B cell (primary cell): ENCODE measurements at regions of chr15 and their contacts with region 1.

Region 1: DNA sequence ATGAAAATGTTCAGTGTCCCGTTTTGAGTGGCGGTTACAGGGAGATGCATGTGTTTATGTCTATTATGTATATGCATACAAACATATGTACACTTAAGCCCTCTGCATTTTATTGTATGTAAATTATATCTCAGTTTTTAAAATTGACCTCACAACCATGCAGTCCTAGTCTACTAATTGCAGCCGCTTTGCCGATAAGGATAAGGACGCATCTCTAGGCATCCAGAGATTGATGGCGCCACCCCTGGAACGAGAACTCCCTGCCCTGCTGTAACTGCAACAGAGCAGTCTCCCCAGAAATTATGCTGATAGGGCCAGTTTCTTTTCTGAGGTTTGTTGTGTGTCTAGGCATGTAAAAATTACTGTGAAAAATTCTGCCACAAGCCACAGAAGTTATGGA is 40.4 kb upstream of the TUBGCP5 start:
- DNase-seq: no peak
- ATAC-seq: no peak
- H3K4me3 ChIP-seq: no peak overlapping the region
- H3K4me3 Mint-ChIP-seq: no peak overlapping the region
- H3K27ac ChIP-seq: no peak overlapping the region
- H3K27ac Mint-ChIP-seq: no peak overlapping the region
- H3K4me1 ChIP-seq: no peaks in the 10 kb centered on the region
- H3K4me1 Mint-ChIP-seq: no peaks in the 10 kb centered on the region
- H3K27me3 ChIP-seq: peaks cover 0 to 6% (median 0%) of the 10 kb centered on the region in 4 experiments
- H3K27me3 Mint-ChIP-seq: peaks cover 6% of the 10 kb centered on the region
- CTCF ChIP-seq: no peak

Region 2: DNA sequence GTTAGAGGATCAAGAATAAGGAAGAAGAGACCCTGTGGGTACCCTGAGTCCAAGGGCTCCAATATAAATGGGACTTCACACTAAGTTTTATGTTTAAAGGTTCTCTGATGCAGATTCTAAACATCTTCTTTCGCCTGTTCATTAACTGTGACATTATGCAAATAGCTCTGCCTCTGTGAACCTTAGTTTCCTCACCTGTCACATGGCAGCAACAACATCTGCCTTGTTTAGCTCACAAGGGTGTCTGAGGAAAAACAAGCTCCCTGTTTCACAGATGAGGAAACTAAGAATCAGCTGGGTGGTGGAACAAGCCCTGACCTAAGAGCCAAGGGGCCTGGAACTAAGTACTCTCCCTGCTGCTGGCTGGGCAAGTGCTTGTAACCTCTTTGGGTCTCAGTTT is 16.0 kb after region 1 on chr15:
- CTCF ChIA-PET with region 1: no interaction called
- POLR2A ChIA-PET with region 1: no interaction called
- intact Hi-C with region 1: loop called (anchors 2 kb)
- DNase-seq: no peak
- ATAC-seq: no peak
- H3K4me3 ChIP-seq: no peak overlapping the region
- H3K4me3 Mint-ChIP-seq: no peak overlapping the region
- H3K27ac ChIP-seq: no peak overlapping the region
- H3K27ac Mint-ChIP-seq: no peak overlapping the region
- H3K4me1 ChIP-seq: no peaks in the 10 kb centered on the region
- H3K4me1 Mint-ChIP-seq: peaks cover 7% of the 10 kb centered on the region
- H3K27me3 ChIP-seq: no peaks in the 10 kb centered on the region
- H3K27me3 Mint-ChIP-seq: peaks cover under 1% of the 10 kb centered on the region
- CTCF ChIP-seq: no peak